ENCODE measurements at regions of chr21 and their contacts with region 1.

Region 1: DNA sequence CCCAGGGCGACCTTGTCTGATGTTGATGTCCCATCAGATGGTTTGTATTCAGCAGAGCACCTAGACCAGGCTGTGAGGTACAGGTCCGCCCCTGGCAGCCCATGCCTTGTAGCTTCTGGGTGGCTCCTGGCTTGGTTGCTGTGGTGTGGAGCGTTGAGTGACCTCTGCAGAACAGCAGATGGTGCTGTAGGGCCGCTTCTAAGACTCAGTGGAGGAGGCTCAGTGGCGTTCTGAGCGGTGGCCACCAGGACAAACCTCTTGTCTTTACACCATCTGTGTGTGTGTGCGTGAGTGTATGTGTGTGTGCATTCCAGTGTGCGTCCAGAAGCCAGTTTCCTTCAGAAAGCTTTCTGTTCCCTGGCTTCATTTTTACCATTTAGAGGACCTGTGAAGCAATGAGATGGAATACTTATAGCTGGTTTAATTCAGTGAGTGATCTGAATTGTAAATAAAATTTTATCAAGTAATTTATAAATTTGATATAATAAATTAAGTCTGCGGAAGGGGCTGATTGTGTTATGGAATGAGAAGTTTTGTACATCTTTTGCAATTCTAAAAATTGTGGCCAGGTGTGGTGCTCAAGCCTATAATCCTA is 66.1 kb downstream of the ADARB1 start:
- DNase-seq: peak; percentile 95
- ATAC-seq: peak; percentile 83
- H3K4me3 ChIP-seq: no peak overlapping the region
- H3K27ac ChIP-seq: no peak overlapping the region
- H3K4me1 ChIP-seq: peaks cover 36% of the 10 kb centered on the region
- H3K27me3 ChIP-seq: no peaks in the 10 kb centered on the region
- CTCF ChIP-seq: peak; percentile 97
- POLR2A ChIP-seq: 0 out of 2 replicates have a peak, but pooled peaks have one; percentile 28
- RAD21 ChIP-seq: peak; percentile 90

Region 2: DNA sequence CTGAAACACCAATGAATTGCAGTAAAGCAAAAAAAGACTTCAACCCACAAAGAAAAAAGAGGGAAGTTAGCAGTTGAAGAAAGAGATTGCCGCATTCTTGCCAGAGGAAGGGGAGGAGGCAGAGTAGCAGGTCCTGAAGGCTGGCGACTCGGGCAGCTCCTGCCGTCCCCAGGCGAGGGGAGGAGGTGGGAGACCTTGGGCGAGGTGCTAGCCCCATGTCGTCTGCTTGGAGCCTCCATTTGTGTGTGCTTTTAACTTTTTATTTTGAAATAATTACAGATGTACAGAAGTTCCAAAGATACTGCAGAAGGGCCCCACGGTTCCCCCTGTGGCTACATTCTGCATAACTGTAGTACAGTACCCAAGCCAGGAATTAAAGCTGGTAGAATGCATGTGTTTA is 780.3 kb before region 1 on chr21:
- CTCF ChIA-PET with region 1: no interaction called
- POLR2A ChIA-PET with region 1: no interaction called
- dilution Hi-C with region 1: no loop called
- in situ Hi-C with region 1: no loop called
- intact Hi-C with region 1: no loop called
- DNase-seq: no peak
- ATAC-seq: no peak
- H3K4me3 ChIP-seq: no peak overlapping the region
- H3K27ac ChIP-seq: no peak overlapping the region
- H3K4me1 ChIP-seq: no peaks in the 10 kb centered on the region
- H3K27me3 ChIP-seq: peaks cover 2% of the 10 kb centered on the region; the same call in 1 of the 2 replicates
- CTCF ChIP-seq: no peak
- POLR2A ChIP-seq: no peak
- RAD21 ChIP-seq: no peak

Region 3: DNA sequence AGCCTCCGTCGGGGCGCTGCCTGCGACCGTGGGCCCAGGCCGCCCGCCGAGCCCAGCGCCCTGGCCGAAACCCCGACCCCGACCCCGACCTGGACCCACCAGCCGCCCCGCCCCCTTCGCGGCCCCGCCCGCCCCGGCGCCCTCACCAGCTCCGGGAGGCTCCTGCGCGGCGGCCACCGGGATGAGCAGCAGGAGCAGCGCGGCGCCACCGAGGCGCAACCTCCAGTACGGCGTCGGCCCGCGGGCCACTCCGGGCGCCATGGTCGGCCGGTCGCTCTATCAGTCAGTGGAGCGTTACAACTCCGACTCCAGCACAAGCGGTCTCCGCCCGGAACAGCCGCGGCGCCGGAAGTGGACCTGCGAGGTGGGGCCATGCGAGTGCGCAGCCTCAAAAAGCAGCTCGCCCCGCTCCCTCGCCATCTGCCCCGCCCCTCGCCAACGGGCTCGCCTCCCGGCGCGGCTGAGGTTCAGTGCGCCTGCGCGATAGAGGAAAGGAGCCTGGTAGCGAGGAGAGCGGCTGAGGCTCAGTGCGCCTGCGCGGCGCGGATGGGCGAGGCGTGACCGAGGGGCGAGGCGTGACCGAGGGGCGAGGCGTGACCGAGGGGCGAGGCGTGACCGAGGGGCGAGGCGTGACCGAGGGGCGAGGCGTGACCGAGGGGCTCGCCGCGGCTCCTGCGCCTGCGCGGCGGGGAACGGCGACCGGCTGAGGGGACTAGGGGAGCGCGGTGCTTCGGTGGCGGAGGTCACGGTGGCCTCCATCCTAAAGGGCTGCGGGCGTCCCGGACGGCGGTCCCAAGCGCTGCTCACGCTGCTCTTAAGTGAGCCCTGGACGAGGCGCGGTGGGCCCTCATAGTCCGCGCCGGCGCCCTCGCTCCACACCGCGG is 266.8 kb before region 1 on chr21 and contains the start of gene PTTG1IP:
- CTCF ChIA-PET with region 1: interaction called, 3 read pairs
- POLR2A ChIA-PET with region 1: no interaction called
- dilution Hi-C with region 1: no loop called
- in situ Hi-C with region 1: no loop called
- intact Hi-C with region 1: loop called (anchors 10 kb)
- DNase-seq: peak; percentile 94
- ATAC-seq: peak; percentile 81
- H3K4me3 ChIP-seq: peak within 1 kb of the TSS; percentile 90
- H3K27ac ChIP-seq: peak within 1 kb of the TSS; percentile 85
- H3K4me1 ChIP-seq: peaks cover 17% of the 10 kb centered on the region
- H3K27me3 ChIP-seq: no peaks in the 10 kb centered on the region
- CTCF ChIP-seq: no peak
- POLR2A ChIP-seq: peak; percentile 83
- RAD21 ChIP-seq: no peak
- total RNA-seq, gene PTTG1IP: 194 and 230 TPM in 2 replicates

Region 4: GRCh38 chr21:44949779-44950198 is 190.7 kb before region 1 on chr21:
- CTCF ChIA-PET with region 1: interaction called, 21 read pairs
- POLR2A ChIA-PET with region 1: no interaction called
- dilution Hi-C with region 1: no loop called
- in situ Hi-C with region 1: no loop called
- intact Hi-C with region 1: loop called (anchors 1 kb)
- DNase-seq: peak; percentile 76
- ATAC-seq: peak; percentile 86
- H3K4me3 ChIP-seq: no peak overlapping the region
- H3K27ac ChIP-seq: no peak overlapping the region
- H3K4me1 ChIP-seq: no peaks in the 10 kb centered on the region
- H3K27me3 ChIP-seq: no peaks in the 10 kb centered on the region
- CTCF ChIP-seq: peak; percentile 80
- POLR2A ChIP-seq: no peak
- RAD21 ChIP-seq: peak; percentile 91

Region 5: DNA sequence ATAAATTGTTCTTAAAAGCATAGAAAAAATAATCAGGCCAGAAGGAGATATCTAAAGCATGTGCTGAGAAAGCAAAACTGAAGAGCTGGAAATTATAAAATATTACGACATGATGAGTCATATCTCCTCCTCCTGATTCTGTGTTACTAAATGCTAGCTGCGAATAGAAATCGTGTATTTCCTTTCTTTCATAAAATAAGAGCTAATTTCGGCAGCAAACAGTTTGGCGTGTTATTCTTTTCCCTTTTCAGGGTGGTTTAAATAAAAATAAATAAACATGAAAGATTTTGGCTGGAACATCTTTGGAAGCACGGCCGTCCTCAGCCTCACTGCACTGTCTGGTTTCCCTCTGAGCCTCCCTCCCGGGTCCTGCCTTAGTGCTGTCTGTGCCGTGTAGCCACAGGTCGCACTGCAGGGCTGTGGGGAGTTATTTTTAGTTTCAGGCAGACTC is 10.1 kb before region 1 on chr21:
- CTCF ChIA-PET with region 1: interaction called, 13 read pairs
- POLR2A ChIA-PET with region 1: no interaction called
- dilution Hi-C with region 1: no loop called
- in situ Hi-C with region 1: no loop called
- intact Hi-C with region 1: no loop called
- DNase-seq: peak; percentile 84
- ATAC-seq: peak; percentile 82
- H3K4me3 ChIP-seq: peak overlapping the region; percentile 31
- H3K27ac ChIP-seq: peak overlapping the region; percentile 56
- H3K4me1 ChIP-seq: peaks cover 24% of the 10 kb centered on the region
- H3K27me3 ChIP-seq: no peaks in the 10 kb centered on the region
- CTCF ChIP-seq: no peak
- POLR2A ChIP-seq: no peak
- RAD21 ChIP-seq: no peak

Region 6: DNA sequence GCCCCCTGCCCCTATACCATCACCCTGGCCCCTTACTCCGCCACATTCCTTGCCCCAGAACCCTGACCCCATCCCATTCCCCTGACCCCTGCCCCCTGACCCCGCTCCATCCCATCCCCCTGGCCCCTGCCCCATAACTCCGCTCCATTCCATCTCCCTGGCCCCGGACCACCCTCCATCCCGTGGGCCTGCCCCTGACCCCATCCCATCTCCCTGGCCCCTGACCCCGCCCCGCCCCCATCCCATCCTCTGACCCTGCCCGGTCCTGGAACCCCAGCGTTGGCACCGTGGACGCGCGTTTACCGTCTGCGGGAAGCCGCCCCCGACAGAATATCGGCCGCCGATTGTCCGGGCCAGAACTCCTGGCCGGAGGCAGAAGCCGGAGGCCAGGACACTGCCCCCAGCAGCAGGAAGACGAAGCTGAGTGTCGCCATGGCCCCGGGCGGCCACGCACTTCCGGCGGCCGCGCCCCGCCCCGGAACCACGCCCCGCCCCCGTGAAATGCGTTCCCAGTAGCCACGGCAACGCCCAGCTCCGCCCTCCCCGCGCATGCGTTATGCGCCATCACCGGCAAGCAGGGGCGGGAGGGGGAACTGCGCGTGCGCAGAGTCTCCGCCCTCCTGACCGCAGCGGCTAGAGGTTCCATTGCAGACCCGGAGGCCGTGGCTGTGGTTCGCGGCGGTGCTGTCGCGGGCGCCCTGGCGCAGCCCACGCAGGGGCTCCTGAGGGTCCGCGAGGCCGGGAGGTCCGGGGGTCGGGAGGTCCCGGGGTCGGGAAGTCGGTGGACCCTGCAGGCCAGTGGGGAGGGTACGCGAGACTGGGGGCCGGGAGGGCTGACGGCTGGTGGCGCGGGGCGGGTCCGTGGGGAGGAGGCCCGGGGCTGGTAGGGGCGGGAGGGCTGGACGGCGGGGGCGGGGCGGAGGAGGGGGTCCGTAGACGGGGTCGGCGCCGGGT is 147.3 kb after region 1 on chr21 and contains the start of gene POFUT2:
- CTCF ChIA-PET with region 1: interaction called, 9 read pairs
- POLR2A ChIA-PET with region 1: no interaction called
- dilution Hi-C with region 1: no loop called
- in situ Hi-C with region 1: loop called (anchors 10 kb)
- intact Hi-C with region 1: loop called (anchors 1 kb)
- DNase-seq: peak; percentile 92
- ATAC-seq: peak; percentile 75
- H3K4me3 ChIP-seq: peak within 1 kb of the TSS; percentile 93
- H3K27ac ChIP-seq: peak within 1 kb of the TSS; percentile 97
- H3K4me1 ChIP-seq: peaks cover 11% of the 10 kb centered on the region
- H3K27me3 ChIP-seq: no peaks in the 10 kb centered on the region
- CTCF ChIP-seq: 0 out of 2 replicates have a peak, but pooled peaks have one; percentile 15
- POLR2A ChIP-seq: peak; percentile 96
- RAD21 ChIP-seq: no peak
- total RNA-seq, gene POFUT2: 18.8 and 23.9 TPM in 2 replicates

Region 7: GRCh38 chr21:45820171-45821091 is 680.0 kb after region 1 on chr21:
- CTCF ChIA-PET with region 1: no interaction called
- POLR2A ChIA-PET with region 1: no interaction called
- dilution Hi-C with region 1: no loop called
- in situ Hi-C with region 1: loop called (anchors 10 kb)
- intact Hi-C with region 1: no loop called
- DNase-seq: peak; percentile 91
- ATAC-seq: peak; percentile 84
- H3K4me3 ChIP-seq: no peak overlapping the region
- H3K27ac ChIP-seq: no peak overlapping the region; the same call in 1 of the 2 replicates
- H3K4me1 ChIP-seq: peaks cover 16% of the 10 kb centered on the region
- H3K27me3 ChIP-seq: no peaks in the 10 kb centered on the region; the same call in 1 of the 2 replicates
- CTCF ChIP-seq: peak; percentile 98
- POLR2A ChIP-seq: no peak
- RAD21 ChIP-seq: peak; percentile 97